Endothelial cell of umbilical vein (primary cell): ENCODE measurements at regions of chr15 and their contacts with region 1.

Region 1: DNA sequence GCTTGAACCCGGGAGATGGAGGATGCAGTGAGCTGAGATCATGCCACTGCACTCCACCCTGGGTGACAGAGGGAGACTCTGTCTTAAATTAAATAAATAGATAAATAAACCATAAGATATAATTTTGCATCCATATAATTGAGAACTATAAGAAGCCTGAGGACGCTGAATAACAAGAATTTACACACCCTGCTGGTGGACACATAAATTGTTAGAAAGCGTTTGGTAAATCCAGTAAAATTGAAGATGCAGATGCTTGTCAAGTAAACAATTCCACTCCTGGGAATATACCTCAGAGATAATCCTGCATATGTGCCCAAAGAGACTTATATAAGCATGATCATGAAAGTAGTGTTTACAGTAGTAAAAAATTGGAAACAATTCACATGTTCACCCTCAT is 41.7 kb downstream of the TTC23 start:
- DNase-seq: no peak
- H3K4me3 ChIP-seq: no peak overlapping the region
- H3K27ac ChIP-seq: no peak overlapping the region
- H3K4me1 ChIP-seq: peaks cover 11% of the 10 kb centered on the region
- H3K27me3 ChIP-seq: no peaks in the 10 kb centered on the region
- CTCF ChIP-seq: no peak
- POLR2A ChIP-seq: no peak

Region 2: DNA sequence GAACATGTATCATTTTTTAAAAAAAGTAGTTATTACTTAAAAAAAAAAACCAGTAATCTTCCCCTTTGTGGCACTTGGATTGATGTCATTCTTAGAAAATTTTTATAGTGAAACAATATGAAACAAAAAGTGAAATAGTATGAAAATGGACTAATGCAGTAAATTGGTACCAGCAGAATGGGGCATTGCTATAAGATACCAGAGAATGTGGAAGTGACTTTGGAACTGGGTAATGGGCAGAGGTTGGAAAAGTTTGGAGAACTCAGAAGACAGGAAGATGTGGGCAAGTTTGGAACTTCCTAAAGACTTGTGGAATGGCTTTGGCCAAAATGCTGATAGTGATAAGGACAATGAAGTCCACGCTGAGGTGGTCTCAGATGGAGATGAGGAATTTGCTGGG is 24.9 kb before region 1 on chr15:
- CTCF ChIA-PET with region 1: interaction called, 4 read pairs
- POLR2A ChIA-PET with region 1: no interaction called
- dilution Hi-C with region 1: no loop called
- intact Hi-C with region 1: loop called (anchors 1 kb)
- DNase-seq: no peak
- H3K4me3 ChIP-seq: no peak overlapping the region
- H3K27ac ChIP-seq: no peak overlapping the region
- H3K4me1 ChIP-seq: no peaks in the 10 kb centered on the region
- H3K27me3 ChIP-seq: no peaks in the 10 kb centered on the region
- CTCF ChIP-seq: no peak
- POLR2A ChIP-seq: no peak